Sigmoid colon (tissue), 7 donors: ENCODE measurements at regions of chr2 and their contacts with region 1.

Region 1: DNA sequence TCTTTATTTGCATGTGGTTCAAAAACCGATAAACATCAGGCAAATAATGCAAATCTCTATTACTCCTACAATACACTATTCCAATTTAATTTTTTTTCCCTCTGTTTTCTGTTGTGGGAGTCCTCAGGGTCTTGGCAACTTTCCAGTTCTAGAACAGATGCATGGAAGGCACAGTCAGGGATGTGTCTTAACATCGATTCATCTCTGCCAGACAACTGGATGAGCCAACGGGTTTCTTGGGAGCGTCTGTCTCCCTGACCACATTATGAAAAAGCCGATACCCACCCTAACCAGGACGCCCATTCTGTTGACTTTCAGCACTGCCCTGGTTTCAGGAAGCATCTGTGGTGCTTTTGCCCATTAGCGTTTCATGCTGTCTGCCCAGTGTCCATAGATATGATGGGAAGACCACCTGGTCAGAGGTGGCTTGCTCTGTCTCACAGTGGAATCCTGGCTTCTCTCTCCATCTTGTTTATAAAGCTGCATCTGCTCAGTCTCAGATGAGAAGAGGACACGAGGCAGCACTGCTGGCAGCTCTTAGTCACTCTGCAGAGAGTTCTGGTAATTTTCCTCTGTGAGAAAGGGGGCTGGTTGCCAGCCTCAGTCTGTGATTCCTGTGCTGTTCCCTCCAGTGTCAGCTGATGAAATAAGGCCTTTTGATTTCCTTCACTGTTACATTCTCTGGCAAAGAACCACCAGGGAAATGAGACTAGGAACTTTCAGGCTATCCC is 57.9 kb upstream of the KCNE4 start:
- DNase-seq: peak; percentile 98
- H3K4me3 ChIP-seq: peak overlapping the region in 1 of 4 donors; percentile 1
- H3K27ac ChIP-seq: peak overlapping the region; percentile 65 to 86 (median 76)
- H3K4me1 ChIP-seq: peaks cover 0 to 22% (median 20%) of the 10 kb centered on the region in 4 donors
- H3K27me3 ChIP-seq: no peaks in the 10 kb centered on the region
- CTCF ChIP-seq: no peak
- EP300 ChIP-seq: peak; percentile 84 to 95 (median 92)
- POLR2A ChIP-seq: no peak

Region 2: DNA sequence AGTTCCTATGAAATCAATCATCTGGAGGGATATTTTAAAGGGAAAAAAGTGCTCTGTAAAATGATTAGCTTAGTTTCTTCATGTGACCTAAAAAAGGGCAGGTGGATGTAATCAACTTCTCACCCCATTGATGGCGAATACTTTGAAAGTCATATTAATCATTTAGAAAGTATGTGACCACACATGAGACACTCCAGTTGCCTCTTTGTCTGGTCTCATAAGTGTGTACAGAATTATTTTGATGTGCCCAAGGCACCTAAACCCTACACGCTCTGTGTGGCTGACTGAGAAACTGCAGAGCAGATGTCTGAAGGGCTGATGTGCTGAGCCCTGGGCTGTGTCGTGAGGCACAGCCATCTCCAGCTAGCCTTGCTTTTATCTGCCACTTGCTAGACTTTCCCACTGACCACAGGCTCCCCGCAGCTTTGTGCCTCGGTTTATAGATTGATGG is 542.8 kb before region 1 on chr2:
- intact Hi-C with region 1: no loop called
- DNase-seq: no peak
- H3K4me3 ChIP-seq: no peak overlapping the region
- H3K27ac ChIP-seq: no peak overlapping the region
- H3K4me1 ChIP-seq: no peaks in the 10 kb centered on the region
- H3K27me3 ChIP-seq: no peaks in the 10 kb centered on the region
- CTCF ChIP-seq: no peak
- EP300 ChIP-seq: no peak
- POLR2A ChIP-seq: no peak

Region 3: GRCh38 chr2:222959336-222959735 is 34.7 kb before region 1 on chr2:
- intact Hi-C with region 1: no loop called
- DNase-seq: no peak
- H3K4me3 ChIP-seq: no peak overlapping the region
- H3K27ac ChIP-seq: no peak overlapping the region
- H3K4me1 ChIP-seq: peaks cover 0 to 5% (median 0%) of the 10 kb centered on the region in 4 donors
- H3K27me3 ChIP-seq: no peaks in the 10 kb centered on the region
- CTCF ChIP-seq: no peak
- EP300 ChIP-seq: no peak
- POLR2A ChIP-seq: no peak

Region 4: GRCh38 chr2:223101340-223102039 is 107.4 kb after region 1 on chr2:
- intact Hi-C with region 1: loop called (anchors 1 kb)
- DNase-seq: no peak
- H3K4me3 ChIP-seq: no peak overlapping the region
- H3K27ac ChIP-seq: peak overlapping the region in 2 of 4 donors; percentile 73 to 79
- H3K4me1 ChIP-seq: peaks cover 0 to 53% (median 42%) of the 10 kb centered on the region in 4 donors
- H3K27me3 ChIP-seq: no peaks in the 10 kb centered on the region
- CTCF ChIP-seq: peak in 3 of 4 experiments; percentile 7 to 28 (median 24)
- EP300 ChIP-seq: no peak
- POLR2A ChIP-seq: no peak

Region 5: DNA sequence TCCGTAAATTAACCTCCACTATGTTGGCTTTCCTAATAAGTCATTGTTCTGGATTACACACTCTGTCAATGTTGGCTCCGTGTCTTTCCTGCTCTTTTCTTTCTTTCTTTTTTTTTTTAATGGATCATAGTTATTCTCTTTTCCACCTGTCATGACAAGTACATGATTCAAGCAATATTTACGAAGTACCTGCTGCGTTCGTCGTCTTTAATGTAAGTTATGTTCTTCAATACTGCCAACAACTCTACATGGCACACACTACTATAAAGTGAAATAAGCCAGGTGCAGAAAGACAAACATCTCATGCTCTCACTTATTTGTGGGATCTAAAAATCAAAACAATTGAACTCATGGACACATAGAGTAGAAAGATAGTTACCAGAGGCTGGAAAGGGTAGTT is 369.0 kb after region 1 on chr2:
- intact Hi-C with region 1: loop called (anchors 2 kb)
- DNase-seq: no peak
- H3K4me3 ChIP-seq: no peak overlapping the region
- H3K27ac ChIP-seq: peak overlapping the region in 2 of 4 donors; percentile 44 to 48
- H3K4me1 ChIP-seq: peaks cover 0 to 24% (median 13%) of the 10 kb centered on the region in 4 donors
- H3K27me3 ChIP-seq: no peaks in the 10 kb centered on the region
- CTCF ChIP-seq: no peak
- EP300 ChIP-seq: peak; percentile 13 to 74 (median 34)
- POLR2A ChIP-seq: no peak

Region 6: GRCh38 chr2:223613017-223613950 is 619.2 kb after region 1 on chr2:
- intact Hi-C with region 1: loop called (anchors 5 kb)
- DNase-seq: peak; percentile 95
- H3K4me3 ChIP-seq: peak overlapping the region; percentile 16 to 39 (median 25)
- H3K27ac ChIP-seq: peak overlapping the region; percentile 65 to 84 (median 78)
- H3K4me1 ChIP-seq: peaks cover 0 to 15% (median 9%) of the 10 kb centered on the region in 4 donors
- H3K27me3 ChIP-seq: no peaks in the 10 kb centered on the region
- CTCF ChIP-seq: no peak
- EP300 ChIP-seq: no peak
- POLR2A ChIP-seq: no peak

Region 7: DNA sequence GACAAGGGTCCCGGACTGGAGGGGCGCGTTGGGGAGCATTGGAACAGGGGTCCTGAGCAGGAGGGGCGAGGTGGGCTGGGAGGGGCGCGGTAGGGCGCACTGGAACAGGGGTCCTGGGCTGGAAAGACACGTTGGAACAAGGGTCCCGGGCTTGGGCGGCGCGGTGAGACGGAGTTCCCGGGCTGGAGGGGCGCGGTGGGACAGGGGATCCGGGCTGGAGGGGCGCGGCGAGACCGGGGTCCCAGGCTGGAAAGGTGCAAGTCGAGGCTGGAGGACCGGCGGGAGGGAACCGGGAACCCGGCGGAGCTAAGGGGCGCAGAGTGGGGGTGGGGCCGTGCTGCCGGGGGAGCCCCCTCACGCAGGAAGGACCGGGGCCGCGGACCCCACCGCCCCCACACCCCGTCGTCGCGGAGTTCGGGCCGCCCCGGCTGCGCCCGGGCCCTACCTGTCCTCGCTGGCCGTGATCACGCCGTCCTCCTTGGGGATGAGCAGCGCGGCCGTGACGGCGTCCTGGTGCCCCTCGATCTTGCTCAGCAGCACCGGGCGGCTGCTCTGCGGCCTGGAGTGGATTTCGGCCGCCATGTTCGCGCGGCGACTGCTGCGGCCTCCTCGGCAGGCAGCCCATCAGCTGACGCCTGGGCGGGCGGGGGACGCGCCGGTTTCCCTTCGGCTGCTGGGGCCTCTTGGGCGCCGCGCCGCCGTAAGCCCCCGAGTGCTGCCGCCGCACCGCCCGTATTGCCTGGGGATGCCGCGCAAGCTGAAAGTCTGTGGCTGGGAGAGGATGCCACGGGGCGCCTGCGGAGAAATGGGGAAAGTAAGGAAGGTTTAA is 950.8 kb after region 1 on chr2 and contains the start of gene WDFY1:
- intact Hi-C with region 1: loop called (anchors 2 kb)
- DNase-seq: peak; percentile 93
- H3K4me3 ChIP-seq: peak within 1 kb of the TSS; percentile 87 to 99 (median 93)
- H3K27ac ChIP-seq: peak within 1 kb of the TSS; percentile 86 to 92 (median 90)
- H3K4me1 ChIP-seq: peaks cover 0 to 40% (median 25%) of the 10 kb centered on the region in 4 donors
- H3K27me3 ChIP-seq: no peaks in the 10 kb centered on the region
- CTCF ChIP-seq: no peak
- EP300 ChIP-seq: no peak
- POLR2A ChIP-seq: peak; percentile 31 to 74
- total RNA-seq, gene WDFY1: 21.6 to 31.1 (median 23.5) TPM